Right ventricle myocardium superior (tissue), 1 donor: ENCODE measurements at regions of chr14 and their contacts with region 1.

Region 1: DNA sequence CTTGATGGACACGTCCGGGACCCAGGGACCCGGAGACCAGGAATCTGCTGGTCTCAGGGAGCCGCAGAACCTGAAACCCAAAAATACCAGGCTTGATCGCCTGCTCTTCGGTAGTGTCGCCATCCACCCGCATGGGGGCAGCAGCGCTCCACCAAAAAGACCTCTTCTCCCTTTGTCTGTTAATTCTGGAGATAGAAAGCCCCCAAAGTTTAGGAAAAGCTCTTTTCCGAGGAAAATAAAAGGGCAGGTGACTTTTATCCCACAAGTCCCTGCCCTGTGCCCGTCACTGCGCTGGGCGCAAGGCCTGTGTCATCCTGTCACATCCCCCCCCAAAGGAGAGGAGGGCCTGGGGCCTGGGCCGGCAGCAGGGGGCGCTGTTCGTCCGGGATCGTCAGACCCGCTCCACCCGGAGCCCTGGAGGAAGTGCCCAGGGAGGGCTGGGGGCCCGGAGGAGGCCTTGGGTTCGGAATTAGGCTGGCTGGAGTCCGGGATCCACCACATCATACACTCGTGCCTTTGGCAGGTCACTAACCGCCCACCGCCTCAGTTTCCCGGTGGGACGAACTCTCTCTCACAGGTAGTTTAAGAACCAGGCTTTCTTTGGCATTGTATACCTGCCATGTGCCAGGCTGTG is 31.9 kb downstream of the DAD1 start:
- DNase-seq: peak; percentile 89
- ATAC-seq: peak; percentile 92

Region 2: DNA sequence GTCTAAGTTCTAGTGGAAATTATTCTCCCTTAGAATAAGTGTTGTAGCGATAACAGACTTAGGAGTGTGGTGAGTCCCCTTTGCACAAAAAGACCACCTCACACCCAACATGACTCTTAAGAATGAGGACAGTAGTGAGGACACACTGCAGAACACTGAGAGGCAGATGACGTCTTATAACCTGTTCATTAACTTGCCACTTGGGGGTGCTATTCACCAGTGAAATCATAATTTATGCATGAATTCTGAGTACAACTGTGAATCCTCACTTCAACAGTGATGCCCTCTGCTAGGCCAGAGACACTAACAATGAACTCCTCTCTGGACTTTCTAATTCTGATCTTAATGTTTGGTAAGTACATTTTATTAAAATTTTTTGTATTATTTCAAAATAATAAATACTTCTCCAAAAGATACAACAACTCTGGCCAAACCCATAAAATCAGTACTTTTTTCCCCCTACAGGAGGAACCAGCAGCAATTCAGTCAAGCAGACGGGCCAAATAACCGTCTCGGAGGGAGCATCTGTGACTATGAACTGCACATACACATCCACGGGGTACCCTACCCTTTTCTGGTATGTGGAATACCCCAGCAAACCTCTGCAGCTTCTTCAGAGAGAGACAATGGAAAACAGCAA is 242.8 kb before region 1 on chr14:
- intact Hi-C with region 1: no loop called
- DNase-seq: no peak
- ATAC-seq: peak; percentile 81

Region 3: DNA sequence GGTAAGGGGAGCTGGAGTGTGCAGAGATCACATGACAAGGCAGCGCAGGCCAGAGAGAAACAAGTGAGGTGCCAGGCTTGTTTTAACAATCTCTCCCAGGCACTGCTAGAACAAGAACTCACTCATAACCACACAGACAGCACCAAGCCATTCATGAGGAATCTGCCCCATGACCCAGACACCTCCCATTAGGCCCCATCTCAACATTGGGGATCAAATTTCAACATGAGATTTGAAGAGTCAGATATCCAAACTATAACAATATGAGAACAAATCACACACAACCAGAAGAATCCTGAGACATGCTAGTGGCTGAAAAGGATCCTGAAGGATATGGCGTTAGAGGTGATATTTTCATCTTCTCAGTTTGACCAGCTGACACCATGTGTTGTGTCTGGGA is 65.1 kb after region 1 on chr14:
- intact Hi-C with region 1: no loop called
- DNase-seq: no peak
- ATAC-seq: no peak

Region 4: DNA sequence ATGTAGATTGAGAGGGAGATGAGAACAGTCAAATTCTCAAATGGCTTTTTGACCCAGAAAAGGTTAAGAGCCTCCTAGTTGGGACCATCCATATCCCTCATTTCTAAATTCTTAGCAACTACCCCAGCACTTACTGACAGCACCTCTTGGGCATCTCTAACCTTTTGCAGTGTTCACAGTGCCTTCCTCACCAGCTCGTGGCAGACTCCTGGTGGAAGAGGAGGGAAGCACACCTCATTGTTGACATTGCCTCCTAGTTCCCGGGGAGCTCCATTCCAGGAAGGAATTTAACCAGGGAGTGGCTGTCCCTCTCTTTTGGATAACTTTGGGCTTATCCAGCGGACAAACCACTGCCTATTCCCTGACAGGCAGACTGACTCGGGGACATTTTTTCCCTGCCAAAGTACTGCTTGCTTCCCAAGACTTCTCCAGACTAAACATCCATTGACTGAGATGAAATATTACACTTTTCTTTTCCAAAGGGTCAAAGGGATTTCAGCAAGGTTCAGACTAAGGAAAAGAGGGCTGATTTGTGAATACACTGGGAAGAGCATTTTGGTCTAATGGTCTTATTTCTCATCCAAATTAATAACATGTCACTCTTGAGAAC is 96.0 kb after region 1 on chr14:
- intact Hi-C with region 1: loop called (anchors 5 kb)
- DNase-seq: peak; percentile 53
- ATAC-seq: peak; percentile 88

Region 5: GRCh38 chr14:22822571-22823098 is 265.5 kb after region 1 on chr14:
- intact Hi-C with region 1: loop called (anchors 5 kb)
- DNase-seq: peak; percentile 86
- ATAC-seq: peak; percentile 89

Region 6: GRCh38 chr14:22852940-22853767 is 296.0 kb after region 1 on chr14:
- intact Hi-C with region 1: loop called (anchors 10 kb)
- DNase-seq: peak; percentile 94
- ATAC-seq: peak; percentile 69